Heart left ventricle (tissue), 16 donors: ENCODE measurements at regions of chr19 and their contacts with region 1.

Region 1: DNA sequence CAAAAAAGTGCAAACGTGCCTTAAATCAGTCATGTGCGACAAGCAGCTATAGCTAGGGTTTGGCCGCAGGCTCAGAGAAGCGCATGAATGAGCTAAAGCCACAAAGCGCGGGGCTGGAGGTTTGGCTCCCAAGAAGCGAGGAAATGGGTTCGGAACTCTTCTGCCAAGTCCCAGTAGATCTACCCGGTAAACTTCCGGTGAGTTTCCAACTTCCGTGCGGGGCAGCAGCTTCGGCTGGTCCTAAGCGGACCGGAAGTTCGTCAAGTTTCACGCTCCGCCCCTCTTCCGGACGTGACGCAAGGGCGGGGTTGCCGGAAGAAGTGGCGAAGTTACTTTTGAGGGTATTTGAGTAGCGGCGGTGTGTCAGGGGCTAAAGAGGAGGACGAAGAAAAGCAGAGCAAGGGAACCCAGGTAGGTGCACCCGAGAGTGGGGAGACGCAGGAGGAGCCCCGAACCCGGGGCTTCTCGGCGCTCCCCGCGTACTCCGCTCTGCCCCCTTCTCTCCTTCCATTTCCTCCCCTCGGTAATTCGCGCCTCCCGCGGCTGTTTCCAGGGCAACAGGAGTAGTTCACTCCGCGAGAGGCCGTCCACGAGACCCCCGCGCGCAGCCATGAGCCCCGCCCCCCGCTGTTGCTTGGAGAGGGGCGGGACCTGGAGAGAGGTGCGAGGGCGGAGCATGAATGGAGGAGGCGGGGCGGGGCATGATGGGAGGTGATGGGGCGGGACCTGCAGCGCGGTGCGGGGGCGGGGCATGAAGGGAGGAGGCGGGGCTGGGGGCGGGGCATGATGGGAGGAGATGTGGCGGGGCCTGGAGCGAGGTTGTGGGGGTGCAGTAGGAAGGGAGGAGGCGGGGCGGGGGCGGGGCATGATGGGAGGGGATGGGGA is at the start of gene NR1H2:
- DNase-seq: peak; percentile 95 to 97 (median 95)
- ATAC-seq: peak; percentile 91 to 98 (median 93)
- H3K4me3 ChIP-seq: peak within 1 kb of the TSS; percentile 74 to 99 (median 92)
- H3K27ac ChIP-seq: peak within 1 kb of the TSS; percentile 96 to 100 (median 99)
- H3K4me1 ChIP-seq: peaks cover 0 to 43% (median 21%) of the 10 kb centered on the region in 12 donors
- H3K27me3 ChIP-seq: no peaks in the 10 kb centered on the region
- CTCF ChIP-seq: no peak
- POLR2A ChIP-seq: peak in 1 of 2 donors; percentile 79
- total RNA-seq, gene NR1H2: 66.2 to 162 (median 74.3) TPM

Region 2: GRCh38 chr19:50357178-50358100 is 19.0 kb before region 1 on chr19:
- intact Hi-C with region 1: no loop called
- DNase-seq: peak; percentile 65 to 89 (median 76)
- ATAC-seq: peak; percentile 68 to 86 (median 75)
- H3K4me3 ChIP-seq: peak overlapping the region; percentile 14 to 71 (median 54)
- H3K27ac ChIP-seq: peak overlapping the region; percentile 37 to 92 (median 82)
- H3K4me1 ChIP-seq: peaks cover 0 to 13% (median 0%) of the 10 kb centered on the region in 12 donors
- H3K27me3 ChIP-seq: no peaks in the 10 kb centered on the region
- CTCF ChIP-seq: peak; percentile 82 to 94 (median 88)
- POLR2A ChIP-seq: no peak

Region 3: DNA sequence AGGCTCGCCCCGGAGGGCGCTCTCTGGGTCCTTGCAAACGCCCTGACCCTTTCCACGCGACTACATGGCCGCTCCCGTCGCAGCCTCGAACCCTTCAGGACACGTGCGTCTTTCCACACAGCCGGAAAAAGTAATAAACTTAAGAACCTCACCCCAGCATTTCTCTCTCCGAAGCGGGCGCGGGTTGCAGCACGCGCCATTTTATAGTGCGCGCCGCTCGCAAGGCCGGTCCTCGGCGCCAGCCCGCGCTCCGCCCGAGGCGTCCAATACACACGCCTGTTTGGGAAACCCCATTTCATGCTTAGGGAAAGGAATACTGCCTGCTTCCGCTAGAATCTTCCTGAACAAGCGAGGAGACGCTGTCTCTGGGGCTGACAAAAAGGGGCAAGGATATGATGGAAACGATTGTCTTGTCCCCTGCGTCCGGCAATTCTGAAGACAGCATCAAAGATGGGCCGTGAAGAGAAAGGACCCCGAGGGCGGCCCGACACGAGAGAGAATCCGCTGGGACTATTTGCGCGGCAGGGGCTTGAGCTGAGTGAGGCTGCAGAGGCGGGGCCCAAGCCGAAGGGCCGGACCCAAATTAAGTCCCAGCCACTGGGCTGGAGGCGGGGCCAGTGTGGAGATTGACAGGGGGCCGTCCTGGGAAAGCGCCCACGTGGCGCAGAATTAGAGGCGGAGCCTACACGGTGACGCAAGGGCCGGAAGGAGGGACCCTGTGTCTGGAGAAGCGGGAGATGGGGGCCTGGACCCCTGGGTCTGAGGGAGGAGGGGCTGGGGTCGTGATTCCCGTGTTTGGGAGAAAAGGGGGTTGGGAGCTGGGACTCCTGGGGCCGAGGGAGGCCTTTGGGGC is 428.2 kb after region 1 on chr19:
- intact Hi-C with region 1: loop called in 1 of 10 experiments (anchors 10 kb)
- DNase-seq: peak; percentile 98 to 100 (median 99)
- ATAC-seq: peak; percentile 99 to 100 (median 100)
- H3K4me3 ChIP-seq: peak overlapping the region; percentile 61 to 98 (median 79)
- H3K27ac ChIP-seq: peak overlapping the region; percentile 88 to 99 (median 97)
- H3K4me1 ChIP-seq: peaks cover 3 to 26% (median 16%) of the 10 kb centered on the region in 12 donors
- H3K27me3 ChIP-seq: no peaks in the 10 kb centered on the region
- CTCF ChIP-seq: no peak
- POLR2A ChIP-seq: no peak